Right ventricle myocardium inferior (tissue), 1 donor: ENCODE measurements at regions of chr3 and their contacts with region 1.

Region 1: GRCh38 chr3:124928333-124929202 is 6.0 kb downstream of the MUC13 start:
- DNase-seq: no peak
- ATAC-seq: peak; percentile 57

Region 2: DNA sequence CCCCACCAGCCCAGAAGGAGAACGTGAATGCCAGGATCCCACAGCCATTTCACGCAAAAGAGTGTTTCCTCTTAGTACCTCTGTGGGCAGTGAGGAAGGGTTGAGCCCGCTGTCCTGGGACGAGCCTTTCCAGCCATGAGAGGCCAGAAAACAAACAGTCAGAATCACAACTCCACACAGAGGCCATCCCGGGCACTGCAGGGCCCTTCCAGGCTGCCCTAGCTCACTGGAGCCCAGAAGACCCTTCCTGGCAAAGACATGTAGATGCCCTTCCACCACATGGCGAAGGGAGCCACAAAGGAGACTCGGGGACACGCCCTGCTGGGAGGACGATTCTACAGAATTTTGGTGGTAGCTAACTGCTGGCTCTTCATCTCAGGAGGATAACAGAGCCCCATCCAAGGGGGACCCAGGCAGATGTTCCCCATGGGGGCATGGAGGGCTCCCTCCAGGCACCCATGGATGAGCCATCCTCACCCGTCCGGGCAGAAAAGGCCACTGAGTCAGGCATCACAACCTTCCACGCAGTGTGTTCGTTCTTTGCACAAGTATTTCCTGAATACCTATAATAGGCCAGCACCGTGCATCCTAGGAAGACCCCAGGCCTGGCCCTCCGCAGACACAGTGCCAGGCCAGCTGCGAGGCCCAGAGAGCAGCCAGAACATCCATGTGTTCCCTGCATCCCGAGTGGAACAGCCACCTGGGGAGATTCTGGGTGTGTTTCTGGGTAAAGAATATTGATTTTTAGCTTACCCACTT is 236.8 kb after region 1 on chr3:
- intact Hi-C with region 1: loop called (anchors 2 kb)
- DNase-seq: no peak
- ATAC-seq: peak; percentile 89

Region 3: GRCh38 chr3:125437631-125438435 is 509.3 kb after region 1 on chr3:
- intact Hi-C with region 1: loop called (anchors 5 kb)
- DNase-seq: no peak
- ATAC-seq: peak; percentile 56

Region 4: GRCh38 chr3:125585595-125586223 is 657.1 kb after region 1 on chr3:
- intact Hi-C with region 1: loop called (anchors 5 kb)
- DNase-seq: no peak
- ATAC-seq: peak; percentile 64